ENCODE measurements at regions of chr3 and their contacts with region 1.

Region 1: DNA sequence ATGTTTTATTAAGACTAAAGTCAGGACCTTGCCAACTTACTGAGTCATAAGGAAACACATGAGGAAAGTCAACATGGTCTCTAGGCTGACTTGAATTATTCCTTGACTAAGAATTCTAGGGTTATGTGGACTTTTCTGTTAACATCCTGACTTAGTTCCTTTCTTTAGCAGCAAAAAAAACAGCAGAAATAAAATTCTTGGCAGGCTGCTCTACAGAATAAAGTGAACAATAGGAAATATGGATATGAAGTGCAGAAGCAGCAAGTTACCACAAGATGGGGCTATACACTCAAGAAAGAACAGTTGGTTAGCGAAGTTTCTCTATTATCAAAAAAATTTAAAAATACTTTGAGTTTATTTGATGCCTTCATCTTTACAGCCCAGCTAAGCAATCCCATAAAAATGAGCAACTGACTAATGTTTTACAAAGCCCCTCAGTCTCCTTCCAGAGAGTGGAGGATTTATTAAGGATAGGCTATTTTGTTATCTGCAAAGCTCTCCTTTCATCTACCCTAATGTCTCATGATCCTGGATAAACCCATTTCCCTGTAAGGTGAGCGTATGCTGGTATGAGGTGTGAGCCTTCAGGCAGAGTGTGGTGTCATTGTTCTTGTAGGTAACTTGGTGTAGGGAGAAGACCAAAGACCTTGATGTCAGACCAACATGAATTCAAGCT is 23.1 kb upstream of the MCCC1 start:
- DNase-seq: peak in 4 of 14 experiments; percentile 14 to 73 (median 64)
- ATAC-seq: peak; percentile 73
- H3K4me3 ChIP-seq: no peak overlapping the region
- H3K4me3 Mint-ChIP-seq: no peak overlapping the region
- H3K27ac ChIP-seq: no peak overlapping the region
- H3K27ac Mint-ChIP-seq: no peak overlapping the region
- H3K4me1 ChIP-seq: no peaks in the 10 kb centered on the region
- H3K4me1 Mint-ChIP-seq: no peaks in the 10 kb centered on the region
- H3K27me3 ChIP-seq: no peaks in the 10 kb centered on the region
- H3K27me3 Mint-ChIP-seq: peaks cover 4% of the 10 kb centered on the region
- CTCF ChIP-seq: peak; percentile 92

Region 2: DNA sequence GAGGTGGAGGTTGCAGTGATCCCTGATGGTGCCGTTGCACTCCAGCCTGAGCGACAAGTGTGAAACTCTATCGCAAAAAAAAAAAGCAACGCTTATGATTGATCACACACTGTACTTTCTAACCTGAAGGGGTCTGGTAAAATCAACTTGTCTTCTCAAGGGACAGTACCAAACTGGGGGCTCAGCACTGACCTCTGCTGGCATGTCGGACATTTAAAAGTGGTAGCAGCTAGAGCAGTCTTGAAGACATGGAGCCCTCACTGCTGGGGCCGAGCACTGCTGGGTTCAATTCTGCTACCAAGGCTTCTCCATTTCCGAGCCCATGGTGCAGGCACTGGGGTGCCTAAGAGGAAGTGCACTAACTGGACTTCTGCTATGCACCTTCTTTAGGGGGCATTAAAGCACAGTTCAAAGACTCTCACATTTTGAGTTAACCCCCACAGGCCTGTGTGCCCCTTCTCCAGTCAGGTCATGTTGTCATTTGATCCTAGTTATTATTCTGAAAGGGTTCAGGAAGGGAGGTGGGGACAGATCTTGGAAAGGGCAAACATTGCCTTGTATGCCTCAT is 66.6 kb after region 1 on chr3:
- CTCF ChIA-PET with region 1: interaction called, 3 read pairs
- POLR2A ChIA-PET with region 1: no interaction called
- intact Hi-C with region 1: loop called (anchors 2 to 10 kb)
- DNase-seq: peak in 7 of 14 experiments; percentile 14 to 50 (median 42)
- ATAC-seq: peak; percentile 39
- H3K4me3 ChIP-seq: no peak overlapping the region
- H3K4me3 Mint-ChIP-seq: no peak overlapping the region
- H3K27ac ChIP-seq: no peak overlapping the region
- H3K27ac Mint-ChIP-seq: no peak overlapping the region
- H3K4me1 ChIP-seq: no peaks in the 10 kb centered on the region
- H3K4me1 Mint-ChIP-seq: no peaks in the 10 kb centered on the region
- H3K27me3 ChIP-seq: no peaks in the 10 kb centered on the region
- H3K27me3 Mint-ChIP-seq: no peaks in the 10 kb centered on the region
- CTCF ChIP-seq: no peak